Gastrocnemius medialis (tissue), 4 donors: ENCODE measurements at regions of chr5 and their contacts with region 1.

Region 1: GRCh38 chr5:44774279-44774880 is 34.4 kb upstream of the MRPS30 start:
- DNase-seq: no peak
- ATAC-seq: no peak
- H3K4me3 ChIP-seq: no peak overlapping the region
- H3K27ac ChIP-seq: no peak overlapping the region
- H3K4me1 ChIP-seq: no peaks in the 10 kb centered on the region
- H3K27me3 ChIP-seq: no peaks in the 10 kb centered on the region
- CTCF ChIP-seq: peak; percentile 12 to 56 (median 55)
- POLR2A ChIP-seq: no peak

Region 2: DNA sequence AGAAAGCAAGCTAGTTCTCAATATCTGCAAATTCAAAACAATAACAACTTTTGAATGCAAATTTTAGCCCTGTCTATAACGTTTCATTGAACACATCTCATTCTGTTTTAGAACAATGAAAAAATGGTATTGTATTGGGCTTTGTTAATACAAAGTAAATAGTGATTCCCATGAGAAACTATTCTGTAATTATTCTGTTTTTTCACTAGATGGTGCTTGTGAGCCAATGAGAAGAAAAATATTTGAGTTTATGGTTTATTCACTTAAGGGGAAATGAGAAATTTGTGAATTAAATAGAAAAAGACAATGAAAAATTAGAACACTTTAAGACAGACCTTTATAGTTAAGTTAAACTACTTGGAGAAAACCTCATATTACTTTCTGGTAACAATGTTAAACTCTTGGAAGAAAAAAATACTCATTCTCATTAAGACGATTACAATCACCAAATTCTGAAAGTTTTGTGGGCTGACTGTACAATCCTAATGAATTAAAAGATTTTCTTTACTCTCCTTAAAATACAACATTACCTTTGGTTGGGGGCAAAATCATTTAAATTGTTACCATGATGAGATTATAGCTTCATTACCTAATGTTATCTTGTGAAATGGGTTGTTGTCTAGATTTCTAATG is 1044.4 kb before region 1 on chr5:
- in situ Hi-C with region 1: loop called in 1 of 4 experiments (anchors 25 kb)
- intact Hi-C with region 1: loop called (anchors 10 kb)
- DNase-seq: no peak
- ATAC-seq: no peak
- H3K4me3 ChIP-seq: no peak overlapping the region
- H3K27ac ChIP-seq: no peak overlapping the region
- H3K4me1 ChIP-seq: no peaks in the 10 kb centered on the region
- H3K27me3 ChIP-seq: no peaks in the 10 kb centered on the region
- CTCF ChIP-seq: peak in 3 of 5 experiments; percentile 26 to 49 (median 43)
- POLR2A ChIP-seq: no peak

Region 3: DNA sequence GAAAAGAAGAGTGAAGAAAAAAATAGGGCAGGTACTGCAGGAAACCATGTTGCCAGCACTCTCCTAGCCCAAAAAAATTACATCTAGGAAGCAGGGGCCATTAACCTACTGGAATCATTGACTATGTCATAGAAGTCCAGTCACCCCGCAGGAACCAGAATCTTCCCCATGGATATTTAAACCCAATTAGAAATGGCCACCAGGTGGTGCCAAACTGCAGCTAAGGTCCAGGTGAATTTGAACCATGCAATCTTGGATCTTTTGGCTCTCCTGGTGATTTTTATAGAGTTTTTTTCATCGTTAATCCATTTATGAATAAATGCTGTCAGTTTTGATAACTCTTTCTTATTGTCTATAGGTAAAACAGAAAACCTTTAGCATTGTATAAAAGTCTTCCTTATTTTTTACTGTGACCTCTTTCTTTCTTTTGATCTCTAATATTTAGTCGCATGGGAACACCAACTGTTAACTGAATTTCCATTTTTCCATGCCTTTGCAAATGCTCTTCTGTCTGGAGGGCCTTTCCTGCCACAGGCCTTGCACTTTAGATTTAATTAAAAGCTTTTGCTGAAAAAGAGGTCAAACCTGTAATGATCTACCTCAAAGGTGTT is 237.6 kb before region 1 on chr5:
- in situ Hi-C with region 1: loop called (anchors 5 to 10 kb)
- intact Hi-C with region 1: loop called (anchors 1 kb)
- DNase-seq: peak; percentile 3 to 13
- ATAC-seq: peak in 1 of 2 donors; percentile 55
- H3K4me3 ChIP-seq: no peak overlapping the region
- H3K27ac ChIP-seq: no peak overlapping the region
- H3K4me1 ChIP-seq: peaks cover 15 to 18% of the 10 kb centered on the region in 2 donors
- H3K27me3 ChIP-seq: no peaks in the 10 kb centered on the region
- CTCF ChIP-seq: peak; percentile 30 to 68 (median 66)
- POLR2A ChIP-seq: no peak